H1 (cell line): ENCODE measurements at regions of chr6 and their contacts with region 1.

Region 1: GRCh38 chr6:42332916-42333315 is 115.3 kb upstream of the MRPS10 start:
- DNase-seq: no peak
- H3K4me3 ChIP-seq: no peak overlapping the region
- H3K27ac ChIP-seq: no peak overlapping the region
- H3K4me1 ChIP-seq: peaks cover 0 to 4% (median 1%) of the 10 kb centered on the region in 4 experiments; a peak in 2 of 7 replicates
- H3K27me3 ChIP-seq: no peaks in the 10 kb centered on the region
- CTCF ChIP-seq: no peak
- EP300 ChIP-seq: no peak
- POLR2A ChIP-seq: no peak
- RAD21 ChIP-seq: no peak

Region 2: GRCh38 chr6:42315991-42316378 is 16.9 kb before region 1 on chr6:
- CTCF ChIA-PET with region 1: interaction called, 11 read pairs
- POLR2A ChIA-PET with region 1: no interaction called
- DNase-seq: peak in 1 of 2 experiments; percentile 34
- H3K4me3 ChIP-seq: no peak overlapping the region
- H3K27ac ChIP-seq: no peak overlapping the region
- H3K4me1 ChIP-seq: peaks cover 0 to 19% (median 9%) of the 10 kb centered on the region in 4 experiments; a peak in 6 of 7 replicates
- H3K27me3 ChIP-seq: no peaks in the 10 kb centered on the region
- CTCF ChIP-seq: no peak
- EP300 ChIP-seq: no peak
- POLR2A ChIP-seq: no peak
- RAD21 ChIP-seq: no peak

Region 3: GRCh38 chr6:42845327-42845694 is 512.4 kb after region 1 on chr6:
- CTCF ChIA-PET with region 1: no interaction called
- POLR2A ChIA-PET with region 1: no interaction called
- DNase-seq: no peak
- H3K4me3 ChIP-seq: no peak overlapping the region
- H3K27ac ChIP-seq: no peak overlapping the region
- H3K4me1 ChIP-seq: no peaks in the 10 kb centered on the region
- H3K27me3 ChIP-seq: no peaks in the 10 kb centered on the region
- CTCF ChIP-seq: no peak
- EP300 ChIP-seq: no peak
- POLR2A ChIP-seq: no peak
- RAD21 ChIP-seq: no peak